Caco-2 (cell line): ENCODE measurements at regions of chr11 and their contacts with region 1.

Region 1: GRCh38 chr11:69943066-69943465 is 123.8 kb upstream of the FGF3 start:
- DNase-seq: peak; percentile 82 to 83
- H3K4me3 ChIP-seq: no peak overlapping the region
- H3K4me3 Mint-ChIP-seq: no peak overlapping the region
- H3K27ac Mint-ChIP-seq: peak overlapping the region; percentile 22
- H3K4me1 ChIP-seq: peaks cover 32% of the 10 kb centered on the region
- H3K4me1 Mint-ChIP-seq: peaks cover 24% of the 10 kb centered on the region
- H3K27me3 ChIP-seq: no peaks in the 10 kb centered on the region
- H3K27me3 Mint-ChIP-seq: no peaks in the 10 kb centered on the region
- CTCF ChIP-seq: peak; percentile 71 to 91

Region 2: GRCh38 chr11:70078095-70078795 is 135.2 kb after region 1 on chr11 and contains the start of gene ANO1:
- CTCF ChIA-PET with region 1: interaction called, 5 read pairs
- POLR2A ChIA-PET with region 1: no interaction called
- intact Hi-C with region 1: loop called (anchors 1 kb)
- DNase-seq: peak; percentile 34 to 68
- H3K4me3 ChIP-seq: peak within 1 kb of the TSS; percentile 31
- H3K4me3 Mint-ChIP-seq: peak within 1 kb of the TSS; percentile 71
- H3K27ac Mint-ChIP-seq: no peak within 1 kb of the TSS
- H3K4me1 ChIP-seq: peaks cover 11% of the 10 kb centered on the region; the same call in 1 of the 2 replicates
- H3K4me1 Mint-ChIP-seq: no peaks in the 10 kb centered on the region
- H3K27me3 ChIP-seq: peaks cover 3% of the 10 kb centered on the region; the same call in 1 of the 2 replicates
- H3K27me3 Mint-ChIP-seq: peaks cover 6% of the 10 kb centered on the region
- CTCF ChIP-seq: peak in 1 of 2 experiments; percentile 35
- total RNA-seq, gene ANO1: 5.8 and 8.4 TPM in 2 replicates